Activated CD4-positive, alpha-beta T cell treated with anti-CD3 and anti-CD28 coated beads, Interleukin-2, amount 10 ng/mL, durations not matched to agents 24 days and 14 days (primary cell): ENCODE measurements at regions of chr12 and their contacts with region 1.

Region 1: DNA sequence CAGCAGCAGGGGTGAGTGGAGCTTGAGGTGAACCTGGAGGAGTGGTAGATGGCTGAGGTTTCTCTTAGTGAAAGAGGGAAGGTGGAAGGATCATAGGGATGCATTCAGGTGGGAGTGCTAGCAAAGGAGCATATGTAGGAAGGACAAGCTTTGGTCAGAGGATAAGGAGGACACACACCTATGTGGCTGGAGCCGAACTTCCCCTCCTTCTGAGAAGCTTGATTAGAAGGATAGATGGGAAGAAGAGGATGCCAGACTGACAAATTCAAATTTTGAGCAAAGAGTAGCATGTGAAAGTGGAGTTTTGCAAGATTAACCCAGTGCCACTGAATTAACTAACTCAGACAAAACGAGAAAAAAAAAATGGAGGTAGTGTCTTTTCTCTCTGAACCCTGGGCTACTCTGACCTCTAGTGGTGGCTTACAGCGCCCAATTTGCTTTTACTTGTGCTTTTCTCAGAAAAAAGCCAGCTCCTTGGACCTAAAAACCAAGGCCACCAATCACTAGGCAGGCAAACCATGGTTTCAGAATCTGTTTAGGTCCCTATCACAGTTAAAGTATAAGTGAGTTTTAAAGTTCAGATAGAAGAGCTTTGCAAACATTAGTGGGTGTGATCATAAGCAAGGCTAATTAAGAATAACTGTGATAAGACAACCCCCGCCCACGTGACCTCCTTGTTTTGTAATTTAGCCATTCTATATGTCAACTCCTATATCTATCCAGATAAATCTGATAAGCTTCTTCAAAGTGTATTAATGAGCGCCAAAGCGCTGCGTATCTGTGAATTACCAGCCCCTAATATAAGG is 15.5 kb downstream of the EMP1 start:
- DNase-seq: peak; percentile 92
- H3K4me3 Mint-ChIP-seq: peak overlapping the region; percentile 4
- H3K27ac Mint-ChIP-seq: peak overlapping the region; percentile 54
- H3K4me1 Mint-ChIP-seq: peaks cover 34% of the 10 kb centered on the region
- H3K27me3 Mint-ChIP-seq: no peaks in the 10 kb centered on the region

Region 2: GRCh38 chr12:12582895-12583303 is 629.2 kb before region 1 on chr12:
- intact Hi-C with region 1: no loop called
- DNase-seq: peak; percentile 78
- H3K4me3 Mint-ChIP-seq: peak overlapping the region; percentile 15
- H3K27ac Mint-ChIP-seq: peak overlapping the region; percentile 79
- H3K4me1 Mint-ChIP-seq: peaks cover 36% of the 10 kb centered on the region
- H3K27me3 Mint-ChIP-seq: no peaks in the 10 kb centered on the region

Region 3: GRCh38 chr12:12837025-12837872 is 374.8 kb before region 1 on chr12:
- intact Hi-C with region 1: loop called (anchors 5 kb)
- DNase-seq: peak; percentile 75
- H3K4me3 Mint-ChIP-seq: no peak overlapping the region
- H3K27ac Mint-ChIP-seq: peak overlapping the region; percentile 77
- H3K4me1 Mint-ChIP-seq: peaks cover 32% of the 10 kb centered on the region
- H3K27me3 Mint-ChIP-seq: no peaks in the 10 kb centered on the region

Region 4: DNA sequence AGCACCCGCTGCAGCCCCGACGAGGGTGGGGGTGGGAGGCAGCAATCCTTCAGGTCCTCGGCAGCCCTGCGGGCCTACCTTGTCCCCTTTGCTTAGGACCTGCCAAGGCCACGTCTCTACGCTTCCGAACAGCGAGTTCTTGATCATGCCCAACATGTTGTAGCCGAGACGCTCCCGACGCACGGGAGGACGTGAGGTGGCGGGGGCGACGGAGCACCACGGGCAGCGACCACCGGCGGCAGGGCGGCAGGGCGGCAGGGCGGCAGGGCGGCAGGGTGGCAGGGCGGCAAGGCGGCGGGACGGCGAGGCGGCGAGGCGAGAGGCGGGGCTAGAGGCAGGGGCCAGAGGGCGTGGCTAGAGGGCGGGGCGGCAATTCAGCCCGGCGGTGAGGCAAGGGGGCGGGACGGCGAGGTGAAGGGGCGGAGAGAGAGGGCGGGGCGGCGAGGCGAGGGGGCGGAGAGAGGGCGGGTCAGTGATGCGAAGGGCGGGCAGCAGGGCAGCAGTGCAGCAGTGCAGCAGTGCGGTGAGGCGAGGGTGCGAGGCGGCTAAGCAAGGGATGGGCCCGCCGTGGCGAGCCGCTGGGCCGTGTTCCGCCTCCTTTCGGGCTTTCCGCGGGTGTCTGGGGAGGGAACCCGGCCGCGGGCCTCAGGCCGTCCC is 212.0 kb before region 1 on chr12 and contains the start of gene HEBP1:
- intact Hi-C with region 1: loop called (anchors 1 kb)
- DNase-seq: peak; percentile 98
- H3K4me3 Mint-ChIP-seq: peak within 1 kb of the TSS; percentile 91
- H3K27ac Mint-ChIP-seq: peak within 1 kb of the TSS; percentile 89
- H3K4me1 Mint-ChIP-seq: peaks cover 30% of the 10 kb centered on the region
- H3K27me3 Mint-ChIP-seq: peaks cover 25% of the 10 kb centered on the region
- total RNA-seq, gene HEBP1: 12.0 and 13.8 TPM in 2 replicates

Region 5: DNA sequence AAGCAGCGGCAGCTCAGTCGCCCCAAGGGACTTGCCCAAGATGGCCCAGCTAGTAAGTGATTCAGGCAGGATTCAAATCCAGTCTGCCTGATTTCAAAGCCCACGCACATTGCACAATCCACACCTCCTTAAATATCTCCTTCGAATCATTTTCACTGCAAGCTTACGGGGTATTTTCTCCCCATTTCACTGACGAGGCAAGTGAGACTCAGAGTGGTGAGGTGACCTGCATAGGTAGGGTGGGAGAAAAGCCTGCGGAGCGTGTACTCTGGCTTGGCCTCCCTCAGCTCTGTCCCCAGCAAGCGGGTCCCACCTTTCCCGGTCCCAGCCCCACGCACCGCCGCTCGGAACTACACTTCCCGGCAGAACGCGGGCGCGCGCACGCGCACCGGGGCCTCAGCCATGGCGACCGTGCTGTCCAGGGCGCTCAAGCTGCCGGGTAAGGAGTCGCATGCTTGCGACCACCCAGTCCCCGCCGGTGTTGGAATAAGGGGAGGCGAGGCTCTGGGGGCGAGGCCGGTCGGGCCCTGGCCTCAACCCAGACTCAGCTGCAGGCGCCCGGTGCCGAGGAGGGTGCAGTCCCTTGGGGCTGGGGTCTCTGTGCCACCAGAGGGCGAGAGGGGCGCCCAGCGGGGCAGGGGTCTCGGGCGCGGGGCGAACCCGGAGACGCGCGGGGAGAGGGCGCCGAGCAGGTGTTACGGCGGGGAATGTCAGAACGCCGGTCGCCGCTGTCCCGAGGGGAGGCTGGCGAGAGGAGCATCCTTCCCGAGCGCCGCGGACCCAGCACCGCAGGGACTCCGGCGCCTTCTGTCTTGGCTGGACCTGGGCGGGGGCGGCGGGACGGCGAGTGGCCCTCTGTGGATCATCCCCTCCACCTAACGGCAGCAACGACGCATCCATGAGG is 167.8 kb before region 1 on chr12 and contains the start of gene FAM234B:
- intact Hi-C with region 1: loop called (anchors 1 kb)
- DNase-seq: peak; percentile 92
- H3K4me3 Mint-ChIP-seq: peak within 1 kb of the TSS; percentile 84
- H3K27ac Mint-ChIP-seq: peak within 1 kb of the TSS; percentile 75
- H3K4me1 Mint-ChIP-seq: peaks cover 19% of the 10 kb centered on the region
- H3K27me3 Mint-ChIP-seq: peaks cover 29% of the 10 kb centered on the region
- total RNA-seq, gene FAM234B: 8.6 and 9.0 TPM in 2 replicates

Region 6: GRCh38 chr12:13165617-13166041 is 46.4 kb before region 1 on chr12:
- intact Hi-C with region 1: loop called (anchors 2 kb)
- DNase-seq: peak; percentile 87
- H3K4me3 Mint-ChIP-seq: no peak overlapping the region
- H3K27ac Mint-ChIP-seq: no peak overlapping the region
- H3K4me1 Mint-ChIP-seq: peaks cover 17% of the 10 kb centered on the region
- H3K27me3 Mint-ChIP-seq: peaks cover 18% of the 10 kb centered on the region